Activated T-helper 2 cell treated with anti-CD3 and anti-CD28 coated beads, Interferon-gamma antibody, Interleukin-2, Interleukin-4, amounts not matched to agents 10 μg/mL and 5 μg/mL and 100 μg/mL, durations not matched to agents 14 hours and 24 hours and 36 hours (primary cell): ENCODE measurements at regions of chr20 and their contacts with region 1.

Region 1: DNA sequence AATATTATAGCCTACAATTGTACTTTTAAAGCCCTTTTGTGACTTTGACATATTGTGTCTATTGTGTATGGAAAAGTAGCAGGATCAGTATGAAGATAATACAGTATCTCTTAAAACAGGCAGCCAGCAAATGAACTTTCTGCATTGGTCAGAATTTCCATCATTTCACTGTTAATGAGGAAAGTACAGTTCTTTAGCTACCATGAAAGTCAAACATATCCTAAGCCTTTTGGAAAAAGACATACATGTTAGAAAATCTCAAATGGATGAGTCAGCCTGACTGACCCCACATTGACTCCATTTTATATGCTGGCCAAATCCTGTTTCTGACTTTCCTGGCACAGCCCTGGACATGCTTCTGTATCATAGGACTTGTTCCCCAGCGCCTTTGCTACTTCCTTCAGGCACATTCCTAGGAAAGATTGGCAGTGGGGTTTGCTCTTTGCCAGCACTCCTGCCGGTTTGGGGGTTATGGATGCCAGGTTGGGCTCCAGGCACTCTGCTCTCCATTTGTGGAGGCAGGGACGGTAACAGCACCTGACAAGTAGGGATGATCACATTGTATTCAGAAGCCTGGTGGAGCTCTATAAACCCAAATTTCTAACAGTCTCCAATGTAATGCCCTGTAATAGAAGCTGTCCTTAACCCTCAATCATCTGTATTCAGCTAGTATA is 43.7 kb downstream of the TOP1 start:
- DNase-seq: no peak
- H3K4me3 Mint-ChIP-seq: no peak overlapping the region
- H3K27ac Mint-ChIP-seq: peak overlapping the region; percentile 78
- H3K4me1 Mint-ChIP-seq: peaks cover 62% of the 10 kb centered on the region
- H3K27me3 Mint-ChIP-seq: no peaks in the 10 kb centered on the region

Region 2: DNA sequence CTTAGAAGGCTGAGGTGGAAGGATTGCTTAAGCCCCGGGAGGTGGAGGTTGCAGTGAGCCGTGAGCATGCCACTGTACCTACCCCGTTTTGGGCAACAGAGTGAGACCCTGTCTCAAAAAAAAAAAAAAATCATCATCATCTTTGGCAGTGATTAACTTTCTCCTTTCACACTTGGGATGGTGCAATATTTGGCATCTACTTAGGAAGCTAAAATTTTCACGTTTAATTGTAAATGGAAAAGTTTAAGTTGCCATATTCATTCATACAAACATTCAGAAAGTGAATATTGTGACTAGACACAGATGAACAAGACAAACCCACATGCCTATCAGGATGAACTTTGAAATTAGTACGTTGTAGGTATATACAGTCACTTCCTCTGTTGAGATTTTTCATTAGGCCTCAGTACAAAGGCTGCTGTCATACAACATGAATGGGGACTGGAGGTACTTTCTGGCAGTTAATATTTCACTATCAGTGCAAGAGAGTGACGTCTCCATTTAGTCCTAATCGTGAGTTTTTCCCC is 33.4 kb before region 1 on chr20:
- intact Hi-C with region 1: loop called (anchors 2 kb)
- DNase-seq: no peak
- H3K4me3 Mint-ChIP-seq: no peak overlapping the region
- H3K27ac Mint-ChIP-seq: peak overlapping the region; percentile 84
- H3K4me1 Mint-ChIP-seq: peaks cover 82% of the 10 kb centered on the region
- H3K27me3 Mint-ChIP-seq: no peaks in the 10 kb centered on the region